ENCODE measurements at regions of chr22 and their contacts with region 1.

Region 1: GRCh38 chr22:31290494-31291471 is 1.5 kb downstream of the PIK3IP1 start:
- DNase-seq: peak; percentile 95
- ATAC-seq: peak; percentile 88
- H3K4me3 Mint-ChIP-seq: peak overlapping the region; percentile 97
- H3K27ac Mint-ChIP-seq: peak overlapping the region; percentile 99
- H3K4me1 Mint-ChIP-seq: peaks cover 77% of the 10 kb centered on the region
- H3K27me3 Mint-ChIP-seq: no peaks in the 10 kb centered on the region

Region 2: DNA sequence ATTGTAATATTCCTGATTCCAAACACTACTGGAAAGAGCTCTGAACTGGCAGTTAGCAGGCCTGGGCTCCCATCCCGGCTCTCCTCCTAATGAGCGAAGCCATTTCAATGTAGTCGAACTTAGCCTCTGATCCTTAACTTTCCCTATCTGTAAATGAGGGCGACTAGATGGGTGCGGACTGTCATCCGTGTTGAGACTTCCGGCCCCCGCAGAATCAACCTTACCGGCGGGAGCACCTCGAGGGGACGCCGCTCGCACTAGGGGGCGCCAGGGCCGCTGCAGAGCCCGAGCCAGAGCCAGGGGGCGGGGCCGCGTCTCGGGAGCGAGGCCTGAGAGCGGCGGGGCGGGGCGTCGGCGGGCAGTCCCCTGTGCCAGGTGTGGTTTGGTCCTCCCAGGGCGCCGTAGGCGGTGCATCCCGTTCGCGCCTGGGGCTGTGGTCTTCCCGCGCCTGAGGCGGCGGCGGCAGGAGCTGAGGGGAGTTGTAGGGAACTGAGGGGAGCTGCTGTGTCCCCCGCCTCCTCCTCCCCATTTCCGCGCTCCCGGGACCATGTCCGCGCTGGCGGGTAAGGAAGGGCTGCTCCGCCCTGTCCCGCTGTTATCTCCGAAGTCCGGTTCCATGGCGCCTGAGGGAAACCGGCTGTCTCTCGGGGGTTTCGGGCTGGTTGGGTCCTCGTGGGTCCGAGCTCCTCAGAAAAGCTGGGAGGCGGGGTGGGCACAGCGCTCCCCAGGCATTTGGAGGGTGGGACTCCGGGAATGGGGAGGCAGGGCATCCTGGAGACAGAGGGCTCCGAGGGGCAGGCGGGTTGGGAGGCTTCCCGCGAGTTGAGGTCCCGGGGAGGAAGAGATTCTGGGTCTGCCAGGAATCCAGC is 78.7 kb before region 1 on chr22 and contains the start of gene LIMK2:
- CTCF ChIA-PET with region 1: interaction called, 14 read pairs
- POLR2A ChIA-PET with region 1: interaction called, 28 read pairs
- DNase-seq: peak; percentile 98
- ATAC-seq: peak; percentile 99
- H3K4me3 Mint-ChIP-seq: peak within 1 kb of the TSS; percentile 87
- H3K27ac Mint-ChIP-seq: peak within 1 kb of the TSS; percentile 90
- H3K4me1 Mint-ChIP-seq: peaks cover 45% of the 10 kb centered on the region
- H3K27me3 Mint-ChIP-seq: no peaks in the 10 kb centered on the region
- total RNA-seq, gene LIMK2: 42.7 to 44.3 TPM

Region 3: GRCh38 chr22:31302006-31302405 is 11.2 kb after region 1 on chr22:
- CTCF ChIA-PET with region 1: interaction called, 17 read pairs
- POLR2A ChIA-PET with region 1: interaction called, 35 read pairs
- DNase-seq: no peak
- ATAC-seq: no peak
- H3K4me3 Mint-ChIP-seq: no peak overlapping the region
- H3K27ac Mint-ChIP-seq: no peak overlapping the region
- H3K4me1 Mint-ChIP-seq: peaks cover 14% of the 10 kb centered on the region
- H3K27me3 Mint-ChIP-seq: no peaks in the 10 kb centered on the region

Region 4: GRCh38 chr22:31313366-31314147 is 22.8 kb after region 1 on chr22:
- CTCF ChIA-PET with region 1: interaction called, 107 read pairs
- POLR2A ChIA-PET with region 1: interaction called, 15 read pairs
- DNase-seq: peak; percentile 75
- ATAC-seq: peak; percentile 63
- H3K4me3 Mint-ChIP-seq: no peak overlapping the region
- H3K27ac Mint-ChIP-seq: no peak overlapping the region
- H3K4me1 Mint-ChIP-seq: peaks cover 2% of the 10 kb centered on the region
- H3K27me3 Mint-ChIP-seq: no peaks in the 10 kb centered on the region